AG04450 (cell line): ENCODE measurements at regions of chr7 and their contacts with region 1.

Region 1: GRCh38 chr7:84412161-84412969 is 217.8 kb upstream of the SEMA3A start:
- DNase-seq: peak; percentile 93
- H3K4me3 ChIP-seq: peak overlapping the region; percentile 14; the same call in 1 of the 2 replicates
- H3K27ac ChIP-seq: peak overlapping the region; percentile 73
- H3K27me3 ChIP-seq: no peaks in the 10 kb centered on the region
- CTCF ChIP-seq: no peak

Region 2: DNA sequence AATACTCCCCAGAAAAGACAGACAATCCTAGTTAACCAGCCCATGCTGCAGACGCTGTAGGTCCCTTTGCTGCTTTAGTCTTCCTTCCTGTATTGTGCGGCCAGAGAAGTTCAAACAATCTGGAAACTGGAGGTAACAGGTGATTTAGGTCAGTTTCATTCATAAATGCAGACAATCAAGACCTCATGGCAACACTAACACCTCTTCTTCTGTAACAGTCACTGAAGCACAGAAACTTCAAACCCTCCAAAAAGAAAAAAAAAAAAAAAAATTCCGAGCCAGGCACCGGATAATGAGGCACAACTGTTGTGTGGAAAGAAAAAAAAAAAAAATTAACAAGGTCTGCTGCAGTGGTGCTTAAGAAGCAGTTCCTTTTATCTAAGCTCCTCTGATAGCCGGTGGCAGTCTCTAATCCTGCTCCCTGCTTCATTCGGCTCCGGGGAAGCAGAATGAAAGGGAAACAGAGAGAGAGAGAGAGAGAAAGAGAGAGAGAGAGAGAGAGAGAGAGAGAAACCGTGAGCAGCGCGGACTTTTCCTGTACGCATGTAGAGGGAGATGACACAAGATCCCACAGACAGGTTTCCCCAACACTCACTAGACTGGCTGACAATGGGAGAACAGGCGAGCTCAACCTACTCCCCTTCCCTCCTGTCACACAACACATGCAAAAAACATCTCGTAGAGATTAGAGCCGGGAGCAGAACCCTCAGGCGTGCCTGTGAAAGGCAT is 217.7 kb before region 1 on chr7 and contains the start of gene SEMA3A:
- CTCF ChIA-PET with region 1: no interaction called
- POLR2A ChIA-PET with region 1: interaction called, 13 read pairs
- DNase-seq: peak; percentile 70
- H3K4me3 ChIP-seq: peak within 1 kb of the TSS; percentile 70
- H3K27ac ChIP-seq: peak within 1 kb of the TSS; percentile 76
- H3K27me3 ChIP-seq: no peaks in the 10 kb centered on the region
- CTCF ChIP-seq: peak; percentile 6; the same call in 1 of the 2 replicates
- polyA plus RNA-seq, gene SEMA3A: 61.9 and 80.2 TPM in 2 replicates

Region 3: GRCh38 chr7:84422790-84423189 is 10.4 kb after region 1 on chr7:
- CTCF ChIA-PET with region 1: no interaction called
- POLR2A ChIA-PET with region 1: no interaction called
- DNase-seq: no peak
- H3K4me3 ChIP-seq: no peak overlapping the region
- H3K27ac ChIP-seq: no peak overlapping the region
- H3K27me3 ChIP-seq: no peaks in the 10 kb centered on the region
- CTCF ChIP-seq: no peak

Region 4: DNA sequence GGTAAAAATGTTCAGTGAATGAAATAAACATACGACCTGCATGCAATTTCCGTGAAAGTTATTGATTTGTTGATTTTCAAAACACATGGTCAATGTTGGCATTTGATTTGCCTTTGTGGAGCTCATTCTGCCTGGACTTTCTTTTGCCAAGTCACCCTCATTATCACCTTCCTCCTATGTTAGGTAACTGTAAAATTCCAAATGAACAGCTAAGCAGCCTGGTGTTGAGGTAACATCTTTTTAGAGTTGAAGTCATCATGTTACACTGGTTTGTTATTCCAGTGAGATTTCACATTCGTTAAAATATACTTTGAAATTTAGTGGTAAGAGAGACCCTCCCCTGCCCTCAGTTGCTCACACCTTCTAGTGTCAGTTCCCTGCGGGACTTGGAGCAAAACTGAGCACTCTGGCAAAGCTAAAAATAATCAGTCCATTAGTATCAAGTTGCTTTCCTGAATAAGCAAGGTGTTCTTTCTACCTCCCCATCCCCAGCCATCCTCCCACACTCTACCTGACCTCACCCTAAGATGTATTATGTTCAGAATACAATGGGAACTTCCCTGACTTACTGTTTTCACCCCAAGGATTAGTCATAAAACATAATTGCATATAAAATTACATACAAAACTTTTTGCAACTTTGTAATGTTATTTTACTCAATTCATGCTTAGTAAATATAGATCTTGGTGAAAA is 65.6 kb after region 1 on chr7:
- CTCF ChIA-PET with region 1: no interaction called
- POLR2A ChIA-PET with region 1: no interaction called
- DNase-seq: no peak
- H3K4me3 ChIP-seq: no peak overlapping the region
- H3K27ac ChIP-seq: no peak overlapping the region
- H3K27me3 ChIP-seq: no peaks in the 10 kb centered on the region
- CTCF ChIP-seq: no peak

Region 5: DNA sequence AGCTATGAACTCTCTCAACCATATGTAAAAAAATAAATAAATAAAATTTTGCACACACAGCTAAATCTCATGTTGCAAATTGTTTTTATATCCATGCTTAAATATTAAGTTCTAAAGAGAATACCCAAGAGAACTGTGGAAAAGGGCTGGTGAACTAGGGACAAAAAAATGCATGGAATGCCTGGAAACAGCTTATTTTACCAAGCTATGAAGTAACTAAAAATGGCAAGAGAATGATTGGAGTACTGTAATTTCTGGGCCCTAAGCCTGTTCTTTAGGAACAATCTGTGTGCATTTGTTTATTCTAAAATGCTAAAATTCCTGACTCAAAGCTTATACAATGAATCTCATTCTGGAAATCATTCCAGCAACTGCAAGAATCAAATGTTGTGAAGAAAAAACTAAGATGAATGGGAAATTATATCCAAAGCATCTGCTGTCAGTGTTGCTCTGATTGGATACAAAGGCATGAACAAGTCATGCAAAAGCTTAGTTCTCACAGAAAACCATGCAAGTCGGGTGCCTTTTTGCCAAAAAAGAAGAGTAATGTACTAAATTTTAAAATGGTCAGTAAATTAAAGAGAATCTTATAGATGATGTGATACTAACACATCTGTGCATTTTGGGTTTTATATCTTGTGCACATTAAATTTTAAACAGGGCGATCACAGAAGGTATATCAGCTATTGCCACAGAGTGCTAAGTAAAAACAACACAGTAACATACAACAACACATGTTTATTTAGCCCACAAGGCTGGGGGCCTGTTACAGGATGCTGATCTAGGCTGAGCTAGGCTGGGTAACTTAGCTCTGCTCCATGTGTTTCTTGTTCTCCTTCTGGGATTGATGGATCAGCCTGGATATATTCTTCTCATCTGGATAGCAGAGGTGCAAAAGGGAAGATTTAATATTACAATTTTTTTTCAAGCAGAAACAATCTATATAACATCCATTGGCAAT is 235.7 kb after region 1 on chr7:
- CTCF ChIA-PET with region 1: no interaction called
- POLR2A ChIA-PET with region 1: interaction called, 11 read pairs
- DNase-seq: peak; percentile 79
- H3K4me3 ChIP-seq: no peak overlapping the region
- H3K27ac ChIP-seq: peak overlapping the region; percentile 41
- H3K27me3 ChIP-seq: no peaks in the 10 kb centered on the region
- CTCF ChIP-seq: no peak